Dendritic cell treated with granulocyte-macrophage colony-stimulating factor and Interleukin-4, amounts not matched to agents 40 ng/mL and 50 ng/mL, for 4 days (primary cell): ENCODE measurements at regions of chr10 and their contacts with region 1.

Region 1: GRCh38 chr10:17249820-17250219 is 21.8 kb downstream of the VIM start:
- H3K4me3 Mint-ChIP-seq: no peak overlapping the region
- H3K27ac Mint-ChIP-seq: no peak overlapping the region
- H3K4me1 Mint-ChIP-seq: peaks cover 4% of the 10 kb centered on the region
- H3K27me3 Mint-ChIP-seq: no peaks in the 10 kb centered on the region

Region 2: GRCh38 chr10:16891375-16892313 is 358.2 kb before region 1 on chr10:
- intact Hi-C with region 1: loop called (anchors 5 kb)
- H3K4me3 Mint-ChIP-seq: peak overlapping the region; percentile 45
- H3K27ac Mint-ChIP-seq: peak overlapping the region; percentile 11
- H3K4me1 Mint-ChIP-seq: peaks cover 18% of the 10 kb centered on the region
- H3K27me3 Mint-ChIP-seq: peaks cover 5% of the 10 kb centered on the region